Adrenal gland (tissue), 19 donors: ENCODE measurements at regions of chr9 and their contacts with region 1.

Region 1: DNA sequence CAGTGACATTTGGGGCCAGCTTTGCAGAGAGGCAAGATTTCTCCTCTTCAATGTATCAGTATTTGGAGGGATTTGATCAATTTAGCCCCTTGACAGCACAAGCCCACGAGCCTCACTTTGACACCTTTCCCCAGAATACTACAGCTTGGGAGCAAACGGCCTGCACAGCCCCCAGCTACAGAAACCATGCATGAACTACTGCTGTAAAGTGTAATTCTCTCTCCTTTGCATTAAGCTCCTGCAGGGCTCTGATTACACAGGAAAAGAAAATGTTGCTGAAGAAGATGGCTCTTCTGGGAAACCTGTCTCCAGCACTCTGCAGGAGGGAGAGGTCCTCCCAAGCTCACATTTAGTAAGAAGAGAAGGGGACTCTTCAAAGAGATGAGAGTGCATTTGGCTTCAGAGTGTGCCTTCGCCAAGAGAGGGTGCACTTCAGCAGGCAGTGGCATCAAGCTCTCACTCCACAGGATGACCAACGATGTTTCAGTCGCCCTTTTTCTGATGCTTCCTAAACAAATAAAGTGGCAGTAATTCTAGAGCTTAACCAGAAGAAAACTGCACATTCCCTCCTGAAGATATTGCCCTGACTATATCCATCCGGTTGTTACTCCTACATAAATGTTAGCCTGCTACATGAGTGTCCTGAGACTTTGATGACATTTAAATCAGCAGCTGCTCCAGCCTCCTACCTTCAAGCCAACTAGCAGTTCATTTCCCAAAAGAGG is 272.2 kb downstream of the AUH start:
- DNase-seq: peak; percentile 35 to 71 (median 58)
- H3K4me3 ChIP-seq: no peak overlapping the region
- H3K27ac ChIP-seq: no peak overlapping the region
- H3K4me1 ChIP-seq: no peaks in the 10 kb centered on the region
- H3K27me3 ChIP-seq: no peaks in the 10 kb centered on the region
- CTCF ChIP-seq: peak in 5 of 6 experiments; percentile 30 to 52 (median 50)
- POLR2A ChIP-seq: no peak

Region 2: DNA sequence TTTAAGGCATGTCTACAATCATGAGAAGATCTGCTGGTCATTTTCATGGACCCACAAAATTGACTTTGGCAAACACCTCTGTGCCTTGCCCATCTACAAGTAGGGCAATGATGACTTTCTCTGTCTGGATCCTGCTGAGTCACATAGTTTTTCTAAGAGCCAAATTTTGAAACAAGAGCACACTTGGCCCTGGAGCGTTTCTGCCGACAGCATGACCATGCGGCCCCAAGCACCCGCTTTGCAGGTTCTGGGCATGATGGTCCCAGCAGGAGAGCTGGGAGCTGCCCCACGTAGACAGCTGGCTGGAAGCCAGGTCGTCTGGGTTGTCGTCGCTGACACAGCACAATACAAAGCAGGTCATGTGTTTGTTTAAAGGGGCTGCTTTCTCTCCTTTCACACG is 128.2 kb before region 1 on chr9:
- intact Hi-C with region 1: no loop called
- DNase-seq: no peak
- H3K4me3 ChIP-seq: no peak overlapping the region
- H3K27ac ChIP-seq: no peak overlapping the region
- H3K4me1 ChIP-seq: no peaks in the 10 kb centered on the region
- H3K27me3 ChIP-seq: no peaks in the 10 kb centered on the region
- CTCF ChIP-seq: no peak
- POLR2A ChIP-seq: no peak

Region 3: GRCh38 chr9:91186518-91187108 is 97.0 kb after region 1 on chr9:
- intact Hi-C with region 1: loop called in 1 of 2 experiments (anchors 10 kb)
- DNase-seq: peak in 1 of 7 donors; percentile 47
- H3K4me3 ChIP-seq: no peak overlapping the region
- H3K27ac ChIP-seq: no peak overlapping the region
- H3K4me1 ChIP-seq: no peaks in the 10 kb centered on the region
- H3K27me3 ChIP-seq: no peaks in the 10 kb centered on the region
- CTCF ChIP-seq: no peak
- POLR2A ChIP-seq: no peak

Region 4: GRCh38 chr9:91211919-91212318 is 122.4 kb after region 1 on chr9:
- intact Hi-C with region 1: no loop called
- DNase-seq: no peak
- H3K4me3 ChIP-seq: no peak overlapping the region
- H3K27ac ChIP-seq: peak overlapping the region in 1 of 5 donors; percentile 28
- H3K4me1 ChIP-seq: peaks cover 12 to 16% of the 10 kb centered on the region in 2 donors
- H3K27me3 ChIP-seq: no peaks in the 10 kb centered on the region
- CTCF ChIP-seq: no peak
- POLR2A ChIP-seq: no peak